Mucosa of descending colon (tissue), 3 donors: ENCODE measurements at regions of chr2 and their contacts with region 1.

Region 1: DNA sequence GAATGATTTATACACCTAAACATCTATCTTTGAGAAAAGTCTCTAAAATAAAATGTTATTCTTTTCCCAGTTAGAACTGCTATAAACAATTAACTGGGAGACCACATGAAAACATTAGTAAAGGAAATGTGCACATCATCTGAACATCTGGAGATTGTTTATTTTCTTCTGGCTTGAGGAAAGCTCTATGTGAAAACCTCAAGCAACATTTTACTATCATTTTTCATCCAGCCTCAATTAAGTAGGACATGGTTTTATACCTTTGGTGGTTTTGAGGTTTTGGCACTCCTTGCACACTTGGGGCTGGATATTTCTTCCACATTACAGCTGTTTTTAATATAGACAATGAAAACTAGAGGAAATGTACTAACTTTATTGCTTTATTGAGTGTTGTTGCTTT is 609.5 kb upstream of the SLC8A1 start:
- DNase-seq: no peak
- ATAC-seq: no peak
- H3K4me3 ChIP-seq: no peak overlapping the region
- H3K4me1 ChIP-seq: no peaks in the 10 kb centered on the region
- CTCF ChIP-seq: no peak

Region 2: DNA sequence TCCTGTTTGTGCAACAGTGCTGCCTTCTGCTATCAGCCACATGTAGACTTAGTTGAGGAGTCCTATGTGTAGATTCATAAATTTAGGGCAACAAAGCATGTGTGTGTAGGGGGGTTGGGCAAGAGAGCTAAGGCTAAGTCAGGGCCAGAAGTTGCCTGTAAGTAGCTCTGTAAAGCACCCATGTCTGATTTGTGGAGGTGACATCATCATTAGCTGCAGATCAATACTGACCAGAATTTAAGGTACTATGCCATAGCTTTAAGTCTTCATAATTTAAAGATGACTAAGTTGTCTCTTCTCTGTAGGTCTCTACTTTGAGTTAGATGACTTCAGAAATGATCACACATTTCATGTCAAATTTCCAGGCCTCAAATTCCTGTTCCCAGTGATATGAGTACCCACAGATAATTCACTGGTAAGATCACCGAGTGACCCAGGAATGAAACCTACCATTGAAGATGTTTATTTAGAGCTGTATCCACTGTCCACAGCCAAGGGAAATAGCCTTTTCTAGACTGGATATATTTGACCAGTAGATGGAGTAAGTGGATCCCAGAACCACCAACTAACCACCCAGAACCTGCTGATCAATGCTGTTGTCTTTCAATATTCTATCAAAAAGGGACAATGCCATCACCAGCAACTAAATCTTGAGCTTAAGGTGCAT is 848.4 kb before region 1 on chr2:
- intact Hi-C with region 1: loop called in 1 of 2 experiments (anchors 10 kb)
- DNase-seq: no peak
- ATAC-seq: peak; percentile 19
- H3K4me3 ChIP-seq: no peak overlapping the region
- H3K4me1 ChIP-seq: no peaks in the 10 kb centered on the region
- CTCF ChIP-seq: no peak

Region 3: GRCh38 chr2:40343902-40344301 is 717.5 kb before region 1 on chr2:
- intact Hi-C with region 1: no loop called
- DNase-seq: no peak
- ATAC-seq: no peak
- H3K4me3 ChIP-seq: no peak overlapping the region
- H3K4me1 ChIP-seq: no peaks in the 10 kb centered on the region
- CTCF ChIP-seq: no peak

Region 4: DNA sequence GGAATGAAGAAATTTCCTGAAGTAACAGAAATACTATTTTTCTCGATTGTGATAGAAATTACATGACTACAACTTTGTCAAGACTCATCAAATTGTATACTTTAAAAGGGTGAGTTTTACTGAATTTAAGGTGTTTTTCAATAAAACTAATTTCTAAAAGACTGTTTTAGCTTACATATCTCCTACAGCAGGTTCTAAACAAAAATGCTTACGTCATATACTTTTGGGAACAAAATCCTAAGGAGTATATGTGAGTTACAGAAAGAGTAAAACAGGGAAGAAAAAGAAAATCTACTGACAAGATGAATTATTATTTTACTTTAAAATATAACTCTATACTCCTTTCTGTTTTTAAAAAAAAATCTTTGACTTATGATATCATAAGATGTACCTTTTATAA is 326.2 kb after region 1 on chr2:
- intact Hi-C with region 1: no loop called
- DNase-seq: no peak
- ATAC-seq: no peak
- H3K4me3 ChIP-seq: no peak overlapping the region
- H3K4me1 ChIP-seq: no peaks in the 10 kb centered on the region
- CTCF ChIP-seq: no peak